Ovary (tissue), 10 donors: ENCODE measurements at regions of chr7 and their contacts with region 1.

Region 1: DNA sequence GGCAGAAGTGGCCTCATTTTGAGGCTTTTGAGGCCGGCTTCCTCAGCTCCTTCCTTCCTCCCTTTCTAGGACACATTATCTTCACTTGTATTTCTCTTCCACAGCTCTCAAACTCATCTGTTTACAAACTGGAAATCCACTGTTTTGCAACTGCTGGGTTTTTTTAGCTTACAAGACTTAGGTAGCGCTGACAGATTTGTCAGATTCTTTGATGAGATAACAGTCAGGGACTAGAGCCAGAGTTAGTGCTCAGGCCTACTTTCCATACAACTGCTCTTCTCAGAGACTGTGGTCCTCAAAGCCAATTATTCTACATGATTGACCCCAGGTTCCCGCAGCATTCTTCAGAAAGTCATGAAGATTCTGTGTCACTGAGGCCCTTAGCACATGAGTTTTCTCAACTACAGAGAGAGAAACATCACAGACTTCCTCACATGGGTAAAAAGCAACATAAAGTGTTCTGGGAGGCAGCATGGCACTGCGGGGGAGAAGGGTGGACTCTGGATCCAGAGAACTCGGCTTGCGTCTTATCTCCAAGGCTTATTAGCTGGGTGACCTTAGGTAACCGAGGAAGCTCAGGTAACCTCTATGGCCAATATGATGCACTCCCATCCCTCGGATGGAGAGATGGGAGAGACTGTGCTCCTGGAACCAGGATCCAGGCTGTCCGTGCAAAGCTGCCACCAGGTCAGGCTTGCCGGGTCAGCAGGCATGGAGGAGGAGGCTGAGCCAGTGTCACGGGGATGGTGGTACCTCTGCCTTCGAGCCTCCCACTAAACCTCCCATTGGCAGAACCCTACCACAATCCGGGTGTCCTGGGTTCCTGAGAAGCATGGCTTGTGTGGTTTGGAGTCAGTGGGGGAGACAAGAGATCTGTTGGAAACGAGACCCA is 10.5 kb downstream of the DDC start:
- DNase-seq: no peak
- H3K4me3 ChIP-seq: no peak overlapping the region
- H3K27ac ChIP-seq: no peak overlapping the region
- H3K4me1 ChIP-seq: peaks cover 16% of the 10 kb centered on the region
- H3K27me3 ChIP-seq: no peaks in the 10 kb centered on the region
- CTCF ChIP-seq: no peak
- EP300 ChIP-seq: no peak
- POLR2A ChIP-seq: no peak

Region 2: GRCh38 chr7:50607524-50608125 is 52.9 kb after region 1 on chr7:
- intact Hi-C with region 1: loop called in 1 of 4 experiments (anchors 2 kb)
- DNase-seq: no peak
- H3K4me3 ChIP-seq: no peak overlapping the region
- H3K27ac ChIP-seq: no peak overlapping the region
- H3K4me1 ChIP-seq: no peaks in the 10 kb centered on the region
- H3K27me3 ChIP-seq: no peaks in the 10 kb centered on the region
- CTCF ChIP-seq: no peak
- EP300 ChIP-seq: no peak
- POLR2A ChIP-seq: no peak